ENCODE measurements at regions of chr1 and their contacts with region 1.

Region 1: DNA sequence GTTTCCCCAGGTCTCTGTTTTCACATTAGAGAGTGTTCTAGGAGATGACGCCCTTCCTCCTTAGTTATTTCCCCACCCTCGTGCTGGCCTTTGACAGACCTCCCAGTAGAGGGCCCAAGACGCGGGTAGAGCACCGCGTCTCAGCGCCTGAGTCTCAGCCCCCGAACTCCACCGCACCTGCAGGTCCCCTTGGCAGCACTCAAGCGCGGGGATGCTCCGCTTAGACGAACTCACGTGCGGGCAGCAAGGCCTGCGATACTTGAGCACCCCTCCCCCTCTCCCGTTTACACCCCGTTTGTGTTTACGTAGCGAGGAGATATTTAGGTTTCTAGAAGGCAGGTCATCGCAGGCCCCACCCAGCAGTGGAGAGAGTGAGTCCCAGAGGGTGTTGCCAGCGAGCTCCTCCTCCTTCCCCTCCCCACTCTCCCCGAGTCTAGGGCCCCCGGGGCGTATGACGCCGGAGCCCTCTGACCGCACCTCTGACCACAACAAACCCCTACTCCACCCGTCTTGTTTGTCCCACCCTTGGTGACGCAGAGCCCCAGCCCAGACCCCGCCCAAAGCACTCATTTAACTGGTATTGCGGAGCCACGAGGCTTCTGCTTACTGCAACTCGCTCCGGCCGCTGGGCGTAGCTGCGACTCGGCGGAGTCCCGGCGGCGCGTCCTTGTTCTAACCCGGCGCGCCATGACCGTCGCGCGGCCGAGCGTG is at the start of gene CD55:
- DNase-seq: peak; percentile 99
- H3K4me3 Mint-ChIP-seq: peak within 1 kb of the TSS; percentile 93
- H3K27ac Mint-ChIP-seq: peak within 1 kb of the TSS; percentile 99
- H3K4me1 Mint-ChIP-seq: peaks cover 33% of the 10 kb centered on the region
- H3K27me3 Mint-ChIP-seq: no peaks in the 10 kb centered on the region
- total RNA-seq, gene CD55: 132 and 135 TPM in 2 replicates

Region 2: DNA sequence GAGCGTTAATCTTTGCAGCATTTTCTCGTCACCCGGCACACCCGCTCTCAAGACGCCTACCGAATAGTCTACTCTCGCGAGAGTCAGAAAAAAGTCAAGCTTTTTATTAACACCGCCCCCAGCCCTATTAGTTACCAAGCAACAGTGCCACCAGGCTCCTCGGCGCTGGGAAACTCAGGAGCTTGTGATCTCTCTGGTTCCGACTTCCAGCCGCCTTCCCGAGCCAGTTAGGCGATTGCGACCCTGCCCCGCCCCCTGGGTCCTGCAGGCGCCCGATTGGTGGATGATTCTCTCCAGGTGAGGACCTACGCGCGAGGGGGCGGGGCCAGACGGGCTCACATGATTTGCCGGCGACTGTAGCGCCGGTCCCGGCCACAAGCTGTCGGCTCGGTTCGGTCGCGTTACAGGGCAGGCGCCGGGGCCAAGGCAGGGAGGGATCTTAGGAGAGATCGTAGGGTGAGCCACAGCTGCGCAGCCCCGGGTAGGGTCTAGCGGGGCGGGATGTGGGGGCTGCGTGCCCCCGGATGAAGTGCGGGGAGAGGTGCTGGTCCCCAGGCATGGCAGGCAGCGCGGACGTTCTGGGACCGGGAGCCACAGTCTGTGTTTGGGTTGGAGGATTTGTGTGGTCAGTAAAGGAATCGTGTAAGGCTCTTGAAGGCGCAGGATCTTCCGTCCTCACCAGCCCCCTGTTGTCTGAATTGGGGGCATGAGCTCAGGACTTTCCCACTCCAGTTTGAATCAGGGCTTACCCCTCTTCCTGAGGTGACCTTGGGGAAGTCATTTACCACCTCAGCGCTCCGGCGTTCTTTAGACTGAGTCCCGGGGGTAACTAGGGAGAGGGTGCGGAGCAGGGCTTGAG is 268.1 kb before region 1 on chr1 and contains the start of gene PFKFB2:
- intact Hi-C with region 1: loop called (anchors 1 kb)
- DNase-seq: peak; percentile 90
- H3K4me3 Mint-ChIP-seq: peak within 1 kb of the TSS; percentile 91
- H3K27ac Mint-ChIP-seq: peak within 1 kb of the TSS; percentile 75
- H3K4me1 Mint-ChIP-seq: peaks cover 30% of the 10 kb centered on the region
- H3K27me3 Mint-ChIP-seq: peaks cover 7% of the 10 kb centered on the region
- total RNA-seq, gene PFKFB2: 1.9 and 2.2 TPM in 2 replicates

Region 3: GRCh38 chr1:207097871-207098324 is 223.3 kb before region 1 on chr1:
- intact Hi-C with region 1: loop called (anchors 5 kb)
- DNase-seq: peak; percentile 19
- H3K4me3 Mint-ChIP-seq: no peak overlapping the region
- H3K27ac Mint-ChIP-seq: peak overlapping the region; percentile 72
- H3K4me1 Mint-ChIP-seq: peaks cover 15% of the 10 kb centered on the region
- H3K27me3 Mint-ChIP-seq: peaks cover 10% of the 10 kb centered on the region

Region 4: GRCh38 chr1:207389740-207390464 is 68.7 kb after region 1 on chr1:
- intact Hi-C with region 1: loop called (anchors 1 kb)
- DNase-seq: no peak
- H3K4me3 Mint-ChIP-seq: no peak overlapping the region
- H3K27ac Mint-ChIP-seq: peak overlapping the region; percentile 82
- H3K4me1 Mint-ChIP-seq: peaks cover 8% of the 10 kb centered on the region
- H3K27me3 Mint-ChIP-seq: no peaks in the 10 kb centered on the region

Measured in activated T-helper 2 cell treated with anti-CD3 and anti-CD28 coated beads, Interferon-gamma antibody, Interleukin-2, Interleukin-4, amounts not matched to agents 10 μg/mL and 5 μg/mL and 100 μg/mL, durations not matched to agents 14 hours and 24 hours and 36 hours (primary cell).